ENCODE measurements at regions of chr10 and their contacts with region 1.

Region 1: DNA sequence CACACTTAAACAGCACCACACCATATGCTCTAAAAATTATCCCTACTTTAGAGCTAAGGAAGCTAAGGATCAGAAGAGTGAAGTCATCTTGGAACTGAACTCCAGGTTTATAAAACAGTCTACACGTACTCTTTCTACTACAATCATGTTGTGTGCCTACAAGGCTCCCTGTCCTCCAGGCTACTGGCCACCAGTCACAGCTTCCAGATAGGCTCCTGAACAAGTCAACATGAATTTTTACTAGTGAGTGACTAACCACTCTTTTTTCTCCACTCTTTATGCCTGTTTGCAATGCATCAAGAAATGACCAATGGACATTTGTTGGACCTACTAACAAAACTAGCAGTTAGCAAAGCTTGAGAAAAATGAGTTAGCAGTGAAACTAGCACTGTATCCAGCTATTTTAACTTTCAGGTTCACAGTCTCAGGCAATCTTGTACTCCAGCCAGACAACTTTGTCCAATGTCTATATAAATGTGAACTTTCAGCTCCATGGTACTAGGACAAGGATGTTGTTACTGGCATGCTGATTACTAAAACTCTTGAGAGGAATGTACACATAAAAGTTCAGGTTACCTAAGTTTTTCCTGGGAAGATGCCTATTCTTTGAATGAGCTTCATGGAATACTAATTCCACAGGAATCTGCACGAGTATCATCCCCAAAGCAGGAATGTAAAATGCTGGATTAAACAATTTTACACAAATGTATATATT is 180.0 kb downstream of the BTAF1 start:
- DNase-seq: no peak
- ATAC-seq: no peak
- H3K4me3 ChIP-seq: no peak overlapping the region
- H3K27ac ChIP-seq: no peak overlapping the region
- H3K4me1 ChIP-seq: peaks cover 30% of the 10 kb centered on the region
- H3K27me3 ChIP-seq: no peaks in the 10 kb centered on the region
- CTCF ChIP-seq: no peak
- EP300 ChIP-seq: no peak
- POLR2A ChIP-seq: no peak
- RAD21 ChIP-seq: no peak

Region 2: DNA sequence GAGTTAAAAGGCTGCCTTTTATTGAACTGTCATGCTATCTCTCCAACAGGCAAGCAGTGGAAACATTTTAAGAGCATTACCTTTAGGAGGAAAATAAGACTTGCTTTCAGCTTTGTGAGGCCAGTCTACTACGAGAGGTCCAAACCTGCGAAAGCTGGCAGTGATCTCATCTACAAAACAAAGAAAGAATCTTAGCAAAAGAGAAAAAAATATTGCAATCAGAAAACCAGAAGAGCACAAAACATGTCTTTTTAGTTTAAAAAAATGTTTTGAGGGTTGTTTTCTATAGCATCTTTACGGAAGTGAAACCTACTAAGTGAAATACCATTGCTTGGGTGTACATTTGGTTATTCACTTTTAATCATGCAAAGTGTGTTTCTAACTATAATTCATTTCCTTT is 39.4 kb after region 1 on chr10:
- CTCF ChIA-PET with region 1: interaction called, 3 read pairs
- POLR2A ChIA-PET with region 1: interaction called, 16 read pairs
- RAD21 ChIA-PET with region 1: interaction called, 14 read pairs
- SMC1A ChIA-PET with region 1: interaction called, 16 read pairs
- in situ Hi-C with region 1: no loop called
- intact Hi-C with region 1: loop called (anchors 1 kb)
- DNase-seq: peak; percentile 43
- ATAC-seq: peak; percentile 79
- H3K4me3 ChIP-seq: peak overlapping the region; percentile 39
- H3K27ac ChIP-seq: peak overlapping the region; percentile 76
- H3K4me1 ChIP-seq: peaks cover 15% of the 10 kb centered on the region
- H3K27me3 ChIP-seq: no peaks in the 10 kb centered on the region
- CTCF ChIP-seq: no peak
- EP300 ChIP-seq: peak; percentile 67 to 79; a peak in 2 of 4 replicates
- POLR2A ChIP-seq: no peak
- RAD21 ChIP-seq: no peak

Region 3: DNA sequence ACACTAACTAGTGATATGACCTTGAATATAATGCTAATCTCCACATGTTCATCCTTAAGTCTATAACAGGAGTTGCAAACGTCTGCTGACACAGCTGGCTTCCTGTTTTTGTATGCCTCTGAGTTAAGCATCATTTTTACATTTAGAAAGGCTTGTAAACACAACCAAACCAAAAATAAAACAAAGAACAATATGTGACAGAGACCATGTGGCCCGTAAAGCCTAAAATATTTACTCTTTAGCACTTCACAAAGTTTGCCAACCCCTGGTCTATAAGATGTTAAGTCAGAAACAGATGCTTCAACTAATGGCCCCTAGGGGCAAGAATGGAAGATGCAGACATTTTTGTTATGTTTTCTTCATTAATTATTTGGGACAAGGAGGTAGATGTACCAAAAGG is 78.0 kb after region 1 on chr10:
- CTCF ChIA-PET with region 1: no interaction called
- POLR2A ChIA-PET with region 1: no interaction called
- RAD21 ChIA-PET with region 1: interaction called, 5 read pairs
- SMC1A ChIA-PET with region 1: interaction called, 11 read pairs
- in situ Hi-C with region 1: no loop called
- intact Hi-C with region 1: no loop called
- DNase-seq: no peak
- ATAC-seq: peak; percentile 72
- H3K4me3 ChIP-seq: no peak overlapping the region
- H3K27ac ChIP-seq: no peak overlapping the region
- H3K4me1 ChIP-seq: no peaks in the 10 kb centered on the region
- H3K27me3 ChIP-seq: no peaks in the 10 kb centered on the region
- CTCF ChIP-seq: peak in 2 of 3 experiments; percentile 6 to 15; a peak in 1 of 6 replicates
- EP300 ChIP-seq: no peak
- POLR2A ChIP-seq: no peak
- RAD21 ChIP-seq: 0 out of 2 replicates have a peak, but pooled peaks have one; percentile 15

Region 4: DNA sequence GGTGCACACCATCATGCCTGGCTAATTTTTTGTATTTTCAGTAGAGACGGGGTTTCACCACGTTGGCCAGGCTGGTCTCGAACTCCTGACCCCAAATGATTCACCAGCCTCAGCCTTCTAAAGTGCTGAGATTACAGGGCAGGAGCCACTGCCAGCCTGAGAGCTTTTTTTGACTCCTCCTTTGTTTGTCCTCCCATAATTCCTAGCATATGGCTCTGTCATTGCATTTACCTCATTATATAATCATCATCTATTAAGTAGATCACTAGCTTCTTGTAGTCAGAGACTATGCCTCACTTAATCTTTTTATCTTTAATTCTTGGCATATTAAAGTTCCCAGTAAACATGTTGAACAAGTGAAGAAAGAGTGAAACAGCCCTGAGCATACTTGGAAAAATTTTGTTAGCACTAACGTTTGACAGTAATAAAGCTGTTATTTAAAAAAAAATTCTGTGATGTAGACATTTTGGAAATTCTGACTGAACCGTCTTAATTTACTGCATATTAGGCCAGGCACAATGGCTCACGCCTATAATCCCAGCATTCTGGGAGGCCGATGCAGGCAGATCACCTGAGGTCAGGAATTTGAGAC is 105.3 kb after region 1 on chr10:
- CTCF ChIA-PET with region 1: interaction called, 26 read pairs
- POLR2A ChIA-PET with region 1: interaction called, 3 read pairs
- RAD21 ChIA-PET with region 1: interaction called, 19 read pairs
- SMC1A ChIA-PET with region 1: interaction called, 27 read pairs
- in situ Hi-C with region 1: no loop called
- intact Hi-C with region 1: loop called (anchors 1 kb)
- DNase-seq: no peak
- ATAC-seq: no peak
- H3K4me3 ChIP-seq: no peak overlapping the region
- H3K27ac ChIP-seq: no peak overlapping the region
- H3K4me1 ChIP-seq: peaks cover 19% of the 10 kb centered on the region
- H3K27me3 ChIP-seq: no peaks in the 10 kb centered on the region
- CTCF ChIP-seq: no peak
- EP300 ChIP-seq: no peak
- POLR2A ChIP-seq: no peak
- RAD21 ChIP-seq: no peak

Region 5: DNA sequence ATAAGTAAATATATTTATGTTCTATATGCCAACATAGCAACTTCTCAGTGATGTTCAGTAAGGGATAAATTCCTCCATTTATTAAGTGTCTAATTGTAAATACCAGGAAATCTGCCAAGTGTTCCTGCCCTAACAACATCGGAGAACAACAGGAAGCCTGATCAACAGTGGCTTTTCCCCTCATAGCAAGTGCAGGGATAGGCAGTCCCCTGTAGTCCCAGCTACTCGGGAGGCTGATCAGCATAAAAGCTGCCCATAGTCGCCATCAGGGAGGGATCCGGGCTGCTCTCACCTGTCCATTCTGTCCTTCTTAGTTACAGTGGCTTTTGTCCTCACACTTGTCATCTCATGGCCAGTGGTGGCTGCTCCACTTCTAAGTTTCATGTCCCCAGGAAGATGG is 329.1 kb after region 1 on chr10:
- CTCF ChIA-PET with region 1: no interaction called
- POLR2A ChIA-PET with region 1: no interaction called
- RAD21 ChIA-PET with region 1: no interaction called
- SMC1A ChIA-PET with region 1: interaction called, 10 read pairs
- in situ Hi-C with region 1: no loop called
- intact Hi-C with region 1: no loop called
- DNase-seq: no peak
- ATAC-seq: no peak
- H3K4me3 ChIP-seq: no peak overlapping the region
- H3K27ac ChIP-seq: no peak overlapping the region
- H3K4me1 ChIP-seq: no peaks in the 10 kb centered on the region
- H3K27me3 ChIP-seq: no peaks in the 10 kb centered on the region
- CTCF ChIP-seq: no peak
- EP300 ChIP-seq: no peak
- POLR2A ChIP-seq: no peak
- RAD21 ChIP-seq: no peak